Adrenal gland (tissue), 19 donors: ENCODE measurements at regions of chr19 and their contacts with region 1.

Region 1: DNA sequence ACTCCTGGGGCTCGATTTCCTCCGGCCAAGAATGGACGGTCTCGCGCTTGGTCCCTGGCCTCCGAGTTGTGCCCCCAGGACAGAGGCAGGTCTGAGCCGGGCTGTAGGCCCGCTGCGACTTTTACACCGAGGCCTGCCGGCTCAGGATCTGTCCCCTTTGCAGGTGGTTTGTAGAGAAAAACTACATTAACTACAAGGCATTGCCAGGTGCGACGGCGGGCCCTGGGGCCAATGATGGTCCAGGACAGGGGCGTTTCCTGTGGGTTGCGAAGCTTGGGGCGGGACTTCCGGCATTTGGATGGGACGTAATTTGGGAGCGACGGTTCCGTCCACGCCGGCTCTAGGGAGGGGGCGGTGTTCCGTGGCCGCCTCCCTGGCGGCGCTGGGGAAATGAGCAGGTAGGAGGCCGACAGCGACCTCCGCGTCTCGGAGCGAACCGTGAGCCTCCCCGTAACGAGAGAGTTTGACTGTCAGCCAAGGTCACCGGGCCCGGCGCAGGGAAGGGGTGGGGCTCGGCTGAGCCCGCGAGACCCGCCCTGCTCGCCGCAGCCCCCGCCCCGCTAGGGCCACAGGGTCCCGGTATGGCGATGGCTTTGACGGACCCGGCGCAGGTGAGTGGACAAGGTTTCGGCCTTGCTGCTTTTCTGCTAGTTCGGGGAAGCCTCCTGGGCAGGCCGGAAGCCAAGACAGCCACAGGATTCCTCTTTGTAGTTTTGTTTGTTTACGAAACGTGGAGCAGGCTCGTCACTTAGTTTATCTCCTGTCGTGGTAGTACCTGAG is at the start of gene ZNF805:
- DNase-seq: peak; percentile 93 to 98 (median 97)
- H3K4me3 ChIP-seq: peak within 1 kb of the TSS; percentile 74 to 99 (median 74)
- H3K27ac ChIP-seq: peak within 1 kb of the TSS; percentile 55 to 90 (median 87)
- H3K4me1 ChIP-seq: peaks cover 12 to 31% of the 10 kb centered on the region in 2 donors
- H3K27me3 ChIP-seq: no peaks in the 10 kb centered on the region
- CTCF ChIP-seq: peak in 2 of 6 experiments; percentile 17 to 26
- POLR2A ChIP-seq: peak; percentile 49 to 71
- total RNA-seq, gene ZNF805: 11.7 to 29.7 (median 19.0) TPM

Region 2: DNA sequence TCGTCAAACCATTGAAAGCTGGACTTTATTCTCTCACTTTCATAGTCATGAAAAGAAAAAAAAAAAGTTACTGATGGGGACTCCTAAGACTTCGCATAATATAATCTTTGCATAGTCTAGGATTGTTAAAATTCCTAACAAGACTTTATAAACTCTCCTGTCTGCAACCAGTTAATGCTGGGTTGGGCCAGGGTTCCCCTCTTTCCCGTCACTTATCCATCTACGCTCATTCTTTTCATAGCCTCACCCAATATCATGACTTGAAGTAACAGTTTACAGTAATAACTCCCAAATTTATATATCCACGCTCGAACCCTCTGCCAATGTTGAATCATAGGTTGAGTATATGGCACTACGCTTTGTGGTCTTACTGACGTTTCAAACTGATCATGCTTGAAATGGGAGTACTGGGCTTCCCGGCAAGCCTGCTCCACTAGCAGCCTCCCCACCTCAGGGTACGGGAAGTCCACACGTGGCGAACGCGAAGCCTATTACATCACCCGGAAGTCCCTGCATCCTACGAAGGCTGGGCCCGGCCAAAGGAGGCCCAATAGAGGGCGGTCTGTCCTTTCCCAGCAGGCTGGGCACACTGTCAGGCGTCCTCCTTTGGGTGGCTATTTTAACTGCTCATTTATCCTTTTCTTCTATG is 39.0 kb after region 1 on chr19:
- intact Hi-C with region 1: loop called in 1 of 2 experiments (anchors 5 kb)
- DNase-seq: peak; percentile 88 to 97 (median 95)
- H3K4me3 ChIP-seq: peak overlapping the region; percentile 13 to 89 (median 64)
- H3K27ac ChIP-seq: peak overlapping the region; percentile 95 to 100 (median 98)
- H3K4me1 ChIP-seq: peaks cover 36 to 54% of the 10 kb centered on the region in 2 donors
- H3K27me3 ChIP-seq: no peaks in the 10 kb centered on the region
- CTCF ChIP-seq: peak in 1 of 6 experiments; percentile 28
- POLR2A ChIP-seq: peak; percentile 75 to 87